PC-9 (cell line): ENCODE measurements at regions of chr20 and their contacts with region 1.

Region 1: DNA sequence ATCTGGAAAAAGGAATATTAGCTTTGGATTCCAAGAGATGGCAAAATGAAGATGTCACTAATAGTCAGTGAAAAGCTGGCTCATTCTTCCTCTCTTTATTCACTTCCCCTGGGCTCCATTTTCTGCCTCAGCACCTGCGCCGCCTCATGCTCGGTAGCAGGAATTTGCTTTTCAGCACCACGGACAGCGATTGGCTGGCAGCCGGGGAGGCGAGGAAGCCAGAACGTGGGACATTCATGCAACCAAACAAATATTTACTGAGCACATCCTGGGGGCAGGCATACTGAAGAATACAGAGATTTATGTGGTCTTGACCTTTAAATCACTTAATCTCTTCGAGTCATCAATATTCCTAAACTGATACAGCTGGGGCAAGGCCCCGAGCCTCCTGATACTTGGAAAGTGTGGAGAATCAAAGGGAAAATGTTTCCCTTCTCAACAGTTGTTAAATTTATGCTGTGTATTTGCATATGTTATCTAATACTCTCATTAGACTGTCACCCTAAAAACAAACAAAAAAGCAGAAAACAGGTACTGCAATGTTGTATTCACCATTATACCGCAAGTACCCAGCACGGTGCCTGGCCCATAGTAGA is 12.1 kb upstream of the PDYN start:
- DNase-seq: peak; percentile 39 to 55
- H3K4me3 ChIP-seq: no peak overlapping the region
- H3K27ac ChIP-seq: no peak overlapping the region
- H3K4me1 ChIP-seq: no peaks in the 10 kb centered on the region
- H3K27me3 ChIP-seq: peaks cover 48% of the 10 kb centered on the region
- CTCF ChIP-seq: no peak

Region 2: GRCh38 chr20:588932-589672 is 1416.8 kb before region 1 on chr20:
- CTCF ChIA-PET with region 1: no interaction called
- POLR2A ChIA-PET with region 1: interaction called, 11 read pairs
- intact Hi-C with region 1: no loop called
- DNase-seq: no peak
- H3K4me3 ChIP-seq: no peak overlapping the region
- H3K27ac ChIP-seq: no peak overlapping the region
- H3K4me1 ChIP-seq: no peaks in the 10 kb centered on the region
- H3K27me3 ChIP-seq: peaks cover 23% of the 10 kb centered on the region; the same call in 1 of the 2 replicates
- CTCF ChIP-seq: no peak

Region 3: GRCh38 chr20:1993986-1994385 is 11.9 kb before region 1 on chr20 and contains the start of gene PDYN:
- CTCF ChIA-PET with region 1: no interaction called
- POLR2A ChIA-PET with region 1: no interaction called
- intact Hi-C with region 1: no loop called
- DNase-seq: no peak
- H3K4me3 ChIP-seq: no peak within 1 kb of the TSS
- H3K27ac ChIP-seq: no peak within 1 kb of the TSS
- H3K4me1 ChIP-seq: no peaks in the 10 kb centered on the region
- H3K27me3 ChIP-seq: peaks cover 100% of the 10 kb centered on the region
- CTCF ChIP-seq: no peak
- total RNA-seq, gene PDYN: not detected in 2 replicates

Region 4: DNA sequence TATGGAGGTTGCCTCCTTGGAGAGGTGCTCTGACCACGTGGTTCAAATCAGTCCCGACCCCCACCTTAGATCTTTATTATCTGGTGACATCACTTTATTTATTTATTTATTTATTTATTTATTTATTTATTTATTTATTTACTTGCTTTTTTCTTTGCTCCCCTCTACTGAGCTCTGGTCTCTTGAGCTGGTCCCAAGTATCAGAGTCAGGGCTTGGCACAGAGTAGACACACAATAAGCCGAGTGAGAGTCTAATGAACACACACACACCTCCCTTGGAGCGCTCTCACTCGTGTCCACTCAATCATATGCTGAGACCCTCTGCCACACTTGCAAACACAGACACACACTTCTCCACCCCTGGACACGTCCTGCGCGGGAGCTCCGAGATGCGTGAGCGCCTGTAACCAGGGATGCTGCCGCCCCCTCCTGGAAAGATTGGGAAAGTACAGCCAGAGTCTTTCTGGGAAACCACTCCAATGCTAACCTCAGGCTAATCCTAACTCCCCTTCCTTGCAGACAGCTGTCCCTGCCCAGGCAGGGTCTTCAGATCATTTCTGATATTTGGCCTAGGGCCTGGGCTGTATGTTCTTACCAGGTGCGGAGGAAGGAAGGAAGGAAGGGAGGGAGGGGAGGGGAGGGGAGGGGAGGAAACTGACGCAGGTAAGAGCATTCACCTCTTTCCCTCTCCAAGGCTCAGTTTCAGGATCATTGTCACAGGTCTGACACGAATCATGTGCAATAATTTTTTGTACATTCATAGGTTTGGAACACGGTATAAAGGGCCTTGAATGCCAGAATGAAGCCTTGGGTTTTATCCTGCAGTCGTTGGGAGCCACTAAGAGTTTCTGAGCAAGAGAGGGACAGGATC is 166.6 kb after region 1 on chr20:
- CTCF ChIA-PET with region 1: no interaction called
- POLR2A ChIA-PET with region 1: no interaction called
- intact Hi-C with region 1: loop called (anchors 2 kb)
- DNase-seq: peak in 1 of 2 experiments; percentile 63
- H3K4me3 ChIP-seq: no peak overlapping the region
- H3K27ac ChIP-seq: no peak overlapping the region
- H3K4me1 ChIP-seq: no peaks in the 10 kb centered on the region
- H3K27me3 ChIP-seq: peaks cover 11% of the 10 kb centered on the region; the same call in 1 of the 2 replicates
- CTCF ChIP-seq: peak; percentile 97